K562 (cell line): ENCODE measurements at regions of chr6 and their contacts with region 1.

Region 1: GRCh38 chr6:26285143-26286134 is 79.6 kb upstream of the BTN3A2 start:
- DNase-seq: peak; percentile 89 to 100 (median 92)
- ATAC-seq: peak; percentile 84
- H3K4me3 ChIP-seq: peak overlapping the region; percentile 50
- H3K27ac ChIP-seq: peak overlapping the region; percentile 97
- H3K4me1 ChIP-seq: peaks cover 11 to 19% of the 10 kb centered on the region in 2 experiments; a peak in 4 of 5 replicates
- H3K27me3 ChIP-seq: no peaks in the 10 kb centered on the region
- CTCF ChIP-seq: peak in 1 of 3 experiments; percentile 5; a peak in 2 of 6 replicates
- EP300 ChIP-seq: peak; percentile 96
- POLR2A ChIP-seq: peak; percentile 99
- RAD21 ChIP-seq: peak in 1 of 2 experiments; percentile 41; a peak in 3 of 4 replicates

Region 2: DNA sequence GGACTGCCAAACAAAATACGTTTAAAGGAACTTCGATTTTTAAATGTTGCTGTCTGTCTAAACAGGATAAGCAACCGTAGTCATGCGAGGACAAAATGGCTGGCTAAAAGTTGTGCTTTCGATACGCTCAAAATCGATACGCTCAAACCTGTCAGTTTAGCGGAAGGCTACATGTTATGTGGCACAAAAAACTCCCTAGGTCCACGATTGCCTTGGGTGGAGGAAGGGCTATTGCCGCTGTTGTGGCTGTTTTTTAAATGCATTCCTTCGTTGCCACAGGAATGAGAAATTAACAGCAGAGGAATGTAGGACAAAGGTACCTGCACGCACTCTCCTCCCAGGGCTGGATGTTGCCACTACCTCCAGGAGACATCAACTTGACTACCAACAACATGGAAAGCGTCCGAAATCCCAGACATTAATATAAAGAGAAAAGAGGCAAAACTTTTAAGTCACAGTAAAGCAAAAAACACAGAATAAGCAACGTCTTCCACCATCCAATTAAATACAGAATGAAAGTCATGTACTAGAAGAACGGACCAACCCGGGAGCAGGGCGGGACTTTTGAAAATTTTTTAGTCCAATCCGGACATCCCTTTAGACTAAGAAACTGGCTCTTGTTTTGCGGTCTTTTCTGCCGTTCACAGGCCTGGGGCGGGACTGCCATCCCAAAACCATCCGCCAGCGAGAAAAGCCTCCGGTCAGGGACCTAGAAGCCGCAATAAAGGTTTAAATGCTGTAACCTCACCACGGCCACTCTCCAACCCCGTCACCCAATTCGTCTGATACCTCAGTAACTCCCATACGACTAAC is 230.4 kb before region 1 on chr6:
- CTCF ChIA-PET with region 1: no interaction called
- POLR2A ChIA-PET with region 1: no interaction called
- in situ Hi-C with region 1: no loop called
- intact Hi-C with region 1: no loop called
- DNase-seq: peak; percentile 81 to 95 (median 88)
- ATAC-seq: peak; percentile 68
- H3K4me3 ChIP-seq: peak overlapping the region; percentile 60
- H3K27ac ChIP-seq: peak overlapping the region; percentile 94
- H3K4me1 ChIP-seq: peaks cover 7 to 29% of the 10 kb centered on the region in 2 experiments
- H3K27me3 ChIP-seq: no peaks in the 10 kb centered on the region
- CTCF ChIP-seq: peak; percentile 24 to 42 (median 29); a peak in 3 of 6 replicates
- EP300 ChIP-seq: peak; percentile 34
- POLR2A ChIP-seq: peak; percentile 95
- RAD21 ChIP-seq: peak in 1 of 2 experiments; percentile 59; a peak in 2 of 4 replicates

Region 3: DNA sequence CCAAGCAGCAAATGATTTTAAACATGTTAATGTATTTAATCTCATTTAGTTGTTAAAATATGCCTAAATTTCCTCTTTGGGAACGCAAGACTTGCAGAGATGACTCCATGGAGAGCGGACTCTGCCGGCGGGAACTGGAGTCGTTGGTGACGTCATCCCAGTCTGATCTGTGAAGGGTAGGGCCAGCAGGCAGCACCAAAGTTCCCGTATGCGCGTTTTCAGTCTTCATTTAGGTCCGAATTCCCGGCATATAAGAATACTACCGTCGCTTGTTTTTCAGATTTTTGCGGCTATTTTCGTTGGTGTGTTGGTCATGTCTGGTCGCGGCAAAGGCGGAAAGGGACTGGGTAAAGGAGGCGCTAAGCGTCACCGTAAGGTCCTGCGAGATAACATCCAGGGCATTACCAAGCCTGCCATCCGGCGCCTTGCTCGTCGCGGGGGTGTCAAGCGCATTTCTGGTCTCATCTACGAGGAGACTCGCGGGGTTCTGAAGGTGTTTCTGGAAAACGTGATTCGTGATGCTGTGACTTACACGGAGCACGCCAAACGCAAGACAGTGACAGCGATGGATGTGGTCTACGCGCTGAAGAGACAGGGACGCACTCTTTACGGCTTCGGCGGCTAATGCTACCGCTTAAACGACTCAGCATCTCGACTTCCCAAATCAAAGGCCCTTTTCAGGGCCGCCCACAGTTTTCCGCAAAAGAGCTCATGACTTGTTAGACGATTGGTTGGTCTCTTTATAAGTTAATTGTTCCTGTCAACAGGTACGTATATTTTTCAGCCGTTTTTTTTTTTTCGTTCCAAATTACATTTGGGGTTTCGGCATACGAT is 80.9 kb before region 1 on chr6:
- CTCF ChIA-PET with region 1: interaction called, 4 read pairs
- POLR2A ChIA-PET with region 1: interaction called, 73 read pairs
- in situ Hi-C with region 1: no loop called
- intact Hi-C with region 1: loop called (anchors 1 kb)
- DNase-seq: peak; percentile 85 to 99 (median 92)
- ATAC-seq: peak; percentile 67
- H3K4me3 ChIP-seq: peak overlapping the region; percentile 57
- H3K27ac ChIP-seq: peak overlapping the region; percentile 99
- H3K4me1 ChIP-seq: peaks cover 9 to 21% of the 10 kb centered on the region in 2 experiments; a peak in 4 of 5 replicates
- H3K27me3 ChIP-seq: no peaks in the 10 kb centered on the region
- CTCF ChIP-seq: peak in 2 of 3 experiments; percentile 67 to 70; a peak in 5 of 6 replicates
- EP300 ChIP-seq: peak; percentile 95
- POLR2A ChIP-seq: peak; percentile 100
- RAD21 ChIP-seq: peak in 1 of 2 experiments; percentile 29; a peak in 2 of 4 replicates

Region 4: GRCh38 chr6:26249957-26250697 is 35.3 kb before region 1 on chr6:
- CTCF ChIA-PET with region 1: no interaction called
- POLR2A ChIA-PET with region 1: interaction called, 33 read pairs
- in situ Hi-C with region 1: no loop called
- intact Hi-C with region 1: loop called (anchors 2 kb)
- DNase-seq: peak; percentile 39 to 86 (median 51)
- ATAC-seq: peak; percentile 73
- H3K4me3 ChIP-seq: peak overlapping the region; percentile 43
- H3K27ac ChIP-seq: peak overlapping the region; percentile 91
- H3K4me1 ChIP-seq: peaks cover 5 to 12% of the 10 kb centered on the region in 2 experiments; a peak in 3 of 5 replicates
- H3K27me3 ChIP-seq: no peaks in the 10 kb centered on the region
- CTCF ChIP-seq: peak; percentile 27 to 63 (median 42); a peak in 5 of 6 replicates
- EP300 ChIP-seq: 0 out of 2 replicates have a peak, but pooled peaks have one; percentile 28
- POLR2A ChIP-seq: peak; percentile 95
- RAD21 ChIP-seq: no peak; a peak in 2 of 4 replicates

Region 5: DNA sequence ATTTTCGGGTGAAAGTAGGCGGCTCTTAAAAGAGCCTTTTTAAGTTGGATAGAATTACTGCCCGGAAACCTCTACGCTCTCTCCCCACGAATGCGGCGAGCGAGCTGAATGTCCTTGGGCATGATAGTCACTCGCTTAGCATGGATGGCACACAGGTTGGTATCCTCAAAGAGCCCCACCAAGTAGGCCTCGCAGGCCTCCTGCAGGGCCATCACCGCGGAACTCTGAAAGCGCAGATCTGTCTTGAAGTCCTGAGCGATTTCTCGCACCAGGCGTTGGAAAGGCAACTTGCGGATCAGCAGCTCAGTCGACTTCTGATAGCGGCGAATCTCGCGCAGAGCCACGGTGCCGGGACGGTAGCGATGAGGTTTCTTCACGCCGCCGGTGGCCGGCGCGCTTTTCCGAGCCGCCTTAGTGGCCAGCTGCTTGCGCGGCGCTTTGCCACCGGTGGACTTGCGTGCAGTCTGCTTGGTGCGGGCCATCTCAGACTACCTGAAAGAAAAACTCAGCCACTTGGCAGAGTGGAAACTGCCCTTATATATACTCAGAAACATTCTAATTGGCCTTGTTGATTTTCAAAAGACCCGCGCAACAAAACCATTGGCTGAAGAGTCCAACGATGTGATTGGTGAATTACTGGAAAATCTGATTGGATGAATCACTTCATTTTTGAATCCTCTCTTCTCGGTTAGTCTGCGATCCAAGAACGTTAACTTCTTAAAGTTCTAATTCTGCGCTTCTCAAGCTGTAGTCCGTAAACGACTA is 14.4 kb before region 1 on chr6:
- CTCF ChIA-PET with region 1: no interaction called
- POLR2A ChIA-PET with region 1: interaction called, 56 read pairs
- in situ Hi-C with region 1: no loop called
- intact Hi-C with region 1: no loop called
- DNase-seq: no peak
- ATAC-seq: no peak
- H3K4me3 ChIP-seq: no peak overlapping the region
- H3K27ac ChIP-seq: no peak overlapping the region
- H3K4me1 ChIP-seq: peaks cover 0 to 5% of the 10 kb centered on the region in 2 experiments; a peak in 3 of 5 replicates
- H3K27me3 ChIP-seq: no peaks in the 10 kb centered on the region
- CTCF ChIP-seq: no peak
- EP300 ChIP-seq: no peak
- POLR2A ChIP-seq: no peak
- RAD21 ChIP-seq: no peak

Region 6: GRCh38 chr6:26304797-26305640 is 19.6 kb after region 1 on chr6:
- CTCF ChIA-PET with region 1: no interaction called
- POLR2A ChIA-PET with region 1: interaction called, 26 read pairs
- in situ Hi-C with region 1: no loop called
- intact Hi-C with region 1: loop called (anchors 1 kb)
- DNase-seq: peak; percentile 75 to 95 (median 81)
- ATAC-seq: peak; percentile 80
- H3K4me3 ChIP-seq: peak overlapping the region; percentile 41
- H3K27ac ChIP-seq: peak overlapping the region; percentile 87
- H3K4me1 ChIP-seq: peaks cover 8 to 54% of the 10 kb centered on the region in 2 experiments
- H3K27me3 ChIP-seq: no peaks in the 10 kb centered on the region
- CTCF ChIP-seq: no peak
- EP300 ChIP-seq: peak; percentile 79
- POLR2A ChIP-seq: no peak
- RAD21 ChIP-seq: peak in 1 of 2 experiments; percentile 14; a peak in 2 of 4 replicates

Region 7: GRCh38 chr6:26322645-26323482 is 37.4 kb after region 1 on chr6:
- CTCF ChIA-PET with region 1: no interaction called
- POLR2A ChIA-PET with region 1: interaction called, 30 read pairs
- in situ Hi-C with region 1: no loop called
- intact Hi-C with region 1: no loop called
- DNase-seq: peak in 3 of 4 experiments; percentile 43 to 96 (median 81)
- ATAC-seq: peak; percentile 62
- H3K4me3 ChIP-seq: peak overlapping the region; percentile 59
- H3K27ac ChIP-seq: peak overlapping the region; percentile 75
- H3K4me1 ChIP-seq: peaks cover 8 to 24% of the 10 kb centered on the region in 2 experiments
- H3K27me3 ChIP-seq: no peaks in the 10 kb centered on the region
- CTCF ChIP-seq: no peak
- EP300 ChIP-seq: peak; percentile 54
- POLR2A ChIP-seq: no peak
- RAD21 ChIP-seq: peak in 1 of 2 experiments; percentile 27; a peak in 1 of 4 replicates